ENCODE measurements at regions of chr5 and their contacts with region 1.

Region 1: DNA sequence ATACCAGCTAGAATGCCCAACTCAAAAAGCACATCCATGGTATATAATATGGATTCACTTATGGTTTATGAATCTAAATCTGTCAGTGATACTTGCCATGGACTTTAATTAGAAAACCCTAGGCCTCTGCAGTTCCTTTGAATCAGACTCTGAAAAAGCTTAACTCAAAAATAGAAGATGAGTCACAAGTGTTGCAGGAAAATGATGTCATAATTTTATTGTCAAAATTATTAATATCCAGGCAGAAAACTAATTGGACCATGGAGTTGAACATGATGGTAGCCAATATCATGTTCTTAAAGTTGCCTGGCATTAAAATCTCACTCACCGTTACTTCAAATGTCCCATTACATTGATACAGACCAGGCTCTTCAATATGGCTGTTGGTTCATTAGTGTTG is 110.2 kb upstream of the PPP1R2B start:
- DNase-seq: no peak
- H3K4me3 ChIP-seq: no peak overlapping the region
- H3K27ac ChIP-seq: no peak overlapping the region
- H3K4me1 ChIP-seq: no peaks in the 10 kb centered on the region
- H3K27me3 ChIP-seq: no peaks in the 10 kb centered on the region
- CTCF ChIP-seq: no peak
- POLR2A ChIP-seq: no peak

Region 2: GRCh38 chr5:156208271-156208670 is 531.6 kb before region 1 on chr5:
- intact Hi-C with region 1: no loop called
- DNase-seq: no peak
- H3K4me3 ChIP-seq: no peak overlapping the region
- H3K27ac ChIP-seq: no peak overlapping the region
- H3K4me1 ChIP-seq: no peaks in the 10 kb centered on the region
- H3K27me3 ChIP-seq: no peaks in the 10 kb centered on the region
- CTCF ChIP-seq: no peak
- POLR2A ChIP-seq: no peak

Region 3: DNA sequence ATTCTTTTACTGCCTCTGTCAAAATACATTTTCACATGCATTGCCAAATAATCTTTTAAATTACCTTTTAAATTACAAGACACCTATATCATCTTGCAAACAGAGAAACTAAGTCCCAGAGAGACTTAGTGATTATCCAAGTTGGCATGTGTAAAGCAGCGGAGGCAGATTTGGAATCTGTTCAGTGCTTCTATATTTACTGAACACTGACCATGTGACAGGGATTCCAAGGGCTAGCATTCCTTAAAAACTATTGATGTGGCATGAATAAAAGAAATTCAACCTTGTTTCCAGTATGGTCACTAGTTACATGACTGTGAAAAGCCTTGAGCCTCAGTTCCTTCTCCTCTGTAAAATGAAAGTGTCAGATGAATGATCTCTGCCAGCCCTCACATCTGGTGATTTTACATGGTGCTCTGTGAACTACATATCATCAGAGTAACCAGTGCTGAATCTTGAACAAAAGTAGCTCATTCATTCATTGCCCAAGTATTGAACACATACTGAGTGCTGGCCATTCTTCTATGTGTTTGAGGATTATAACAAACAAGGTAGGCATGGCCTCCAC is 38.3 kb after region 1 on chr5:
- intact Hi-C with region 1: loop called (anchors 5 kb)
- DNase-seq: no peak
- H3K4me3 ChIP-seq: no peak overlapping the region
- H3K27ac ChIP-seq: no peak overlapping the region
- H3K4me1 ChIP-seq: no peaks in the 10 kb centered on the region
- H3K27me3 ChIP-seq: no peaks in the 10 kb centered on the region
- CTCF ChIP-seq: no peak
- POLR2A ChIP-seq: no peak

Measured in breast epithelium (tissue), 4 donors.